ENCODE measurements at regions of chr3 and their contacts with region 1.

Region 1: DNA sequence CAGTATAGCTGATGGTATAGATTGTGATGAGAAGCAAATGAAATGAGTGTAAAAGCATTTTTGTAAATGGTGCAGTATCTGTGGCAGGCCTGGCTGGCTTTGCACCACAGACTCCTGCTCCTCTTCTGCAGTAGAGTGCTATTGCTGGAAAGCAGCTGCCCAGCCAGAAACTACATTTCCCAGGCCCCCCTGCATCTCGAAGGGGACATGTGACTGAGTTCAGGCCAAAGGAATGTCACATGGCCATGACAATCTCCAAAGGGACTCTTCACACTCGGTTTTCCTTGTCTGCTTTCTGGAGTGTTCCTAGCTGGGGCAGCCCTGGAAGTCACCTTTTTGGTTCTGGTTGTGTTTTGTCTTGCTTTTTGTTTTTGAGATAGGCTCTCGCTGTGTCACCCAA is 277.1 kb downstream of the SUCLG2 start:
- DNase-seq: peak; percentile 8
- H3K4me3 ChIP-seq: no peak overlapping the region
- H3K27ac ChIP-seq: no peak overlapping the region
- H3K4me1 ChIP-seq: no peaks in the 10 kb centered on the region
- H3K27me3 ChIP-seq: no peaks in the 10 kb centered on the region

Region 2: GRCh38 chr3:67605377-67605776 is 228.1 kb after region 1 on chr3:
- in situ Hi-C with region 1: loop called (anchors 10 kb)
- DNase-seq: peak; percentile 86
- H3K4me3 ChIP-seq: no peak overlapping the region
- H3K27ac ChIP-seq: no peak overlapping the region
- H3K4me1 ChIP-seq: peaks cover 11% of the 10 kb centered on the region
- H3K27me3 ChIP-seq: no peaks in the 10 kb centered on the region

Region 3: GRCh38 chr3:67783281-67784250 is 406.3 kb after region 1 on chr3:
- in situ Hi-C with region 1: loop called (anchors 10 kb)
- DNase-seq: peak; percentile 9
- H3K4me3 ChIP-seq: no peak overlapping the region
- H3K27ac ChIP-seq: no peak overlapping the region
- H3K4me1 ChIP-seq: no peaks in the 10 kb centered on the region
- H3K27me3 ChIP-seq: no peaks in the 10 kb centered on the region

Region 4: GRCh38 chr3:67940210-67940952 is 563.1 kb after region 1 on chr3:
- in situ Hi-C with region 1: no loop called
- DNase-seq: peak; percentile 0
- H3K4me3 ChIP-seq: no peak overlapping the region
- H3K27ac ChIP-seq: no peak overlapping the region
- H3K4me1 ChIP-seq: no peaks in the 10 kb centered on the region
- H3K27me3 ChIP-seq: no peaks in the 10 kb centered on the region

Measured in GM23248 (cell line).